K562 (cell line): ENCODE measurements at regions of chr3 and their contacts with region 1.

Region 1: GRCh38 chr3:4807381-4808280 is 171.6 kb upstream of the BHLHE40 start:
- DNase-seq: no peak
- ATAC-seq: peak; percentile 58
- H3K4me3 ChIP-seq: no peak overlapping the region
- H3K27ac ChIP-seq: no peak overlapping the region
- H3K4me1 ChIP-seq: peaks cover 0 to 36% of the 10 kb centered on the region in 2 experiments; a peak in 4 of 5 replicates
- H3K27me3 ChIP-seq: no peaks in the 10 kb centered on the region
- CTCF ChIP-seq: no peak
- EP300 ChIP-seq: no peak
- POLR2A ChIP-seq: no peak
- RAD21 ChIP-seq: no peak

Region 2: GRCh38 chr3:4797201-4797705 is 10.4 kb before region 1 on chr3:
- CTCF ChIA-PET with region 1: no interaction called
- POLR2A ChIA-PET with region 1: interaction called, 20 read pairs
- in situ Hi-C with region 1: no loop called
- intact Hi-C with region 1: no loop called
- DNase-seq: no peak
- ATAC-seq: no peak
- H3K4me3 ChIP-seq: no peak overlapping the region
- H3K27ac ChIP-seq: no peak overlapping the region
- H3K4me1 ChIP-seq: no peaks in the 10 kb centered on the region
- H3K27me3 ChIP-seq: no peaks in the 10 kb centered on the region
- CTCF ChIP-seq: no peak
- EP300 ChIP-seq: no peak
- POLR2A ChIP-seq: no peak
- RAD21 ChIP-seq: no peak